B cell (primary cell): ENCODE measurements at regions of chr2 and their contacts with region 1.

Region 1: DNA sequence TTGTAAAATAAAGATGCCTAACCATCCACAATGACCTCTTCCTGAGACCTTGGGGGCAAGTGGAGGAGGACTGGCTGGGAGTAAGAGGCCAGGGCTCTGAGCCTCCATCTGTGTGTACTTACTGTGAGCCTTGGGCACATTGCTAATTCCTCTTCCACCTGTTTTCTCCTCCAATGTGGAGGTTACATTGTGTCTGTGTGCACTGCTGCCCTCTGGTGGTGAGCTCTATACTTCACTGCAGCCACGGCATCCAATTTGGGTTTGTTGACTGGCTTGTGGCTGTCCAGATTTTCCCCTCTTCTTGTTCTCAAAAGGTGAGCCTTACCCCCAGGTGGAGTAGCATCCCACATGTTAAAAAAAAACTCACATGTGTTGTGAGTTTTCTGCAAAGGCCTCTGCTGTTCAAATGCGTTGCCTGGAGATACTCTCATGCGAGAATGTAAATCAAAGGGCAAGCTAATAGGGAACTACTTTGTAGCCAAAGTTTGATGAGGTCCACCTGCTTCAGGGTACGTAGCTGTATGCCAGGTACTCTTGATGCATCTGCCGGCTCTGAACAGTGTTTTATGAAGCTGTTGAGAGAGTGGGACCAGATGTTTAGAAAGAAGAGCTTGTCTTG is 80.8 kb downstream of the APOB start:
- DNase-seq: peak; percentile 78
- ATAC-seq: peak; percentile 65
- H3K4me3 ChIP-seq: no peak overlapping the region
- H3K4me3 Mint-ChIP-seq: no peak overlapping the region
- H3K27ac ChIP-seq: no peak overlapping the region
- H3K27ac Mint-ChIP-seq: no peak overlapping the region
- H3K4me1 ChIP-seq: no peaks in the 10 kb centered on the region
- H3K4me1 Mint-ChIP-seq: no peaks in the 10 kb centered on the region
- H3K27me3 ChIP-seq: peaks cover 0 to 16% (median 4%) of the 10 kb centered on the region in 4 experiments
- H3K27me3 Mint-ChIP-seq: peaks cover 26% of the 10 kb centered on the region
- CTCF ChIP-seq: peak; percentile 92

Region 2: DNA sequence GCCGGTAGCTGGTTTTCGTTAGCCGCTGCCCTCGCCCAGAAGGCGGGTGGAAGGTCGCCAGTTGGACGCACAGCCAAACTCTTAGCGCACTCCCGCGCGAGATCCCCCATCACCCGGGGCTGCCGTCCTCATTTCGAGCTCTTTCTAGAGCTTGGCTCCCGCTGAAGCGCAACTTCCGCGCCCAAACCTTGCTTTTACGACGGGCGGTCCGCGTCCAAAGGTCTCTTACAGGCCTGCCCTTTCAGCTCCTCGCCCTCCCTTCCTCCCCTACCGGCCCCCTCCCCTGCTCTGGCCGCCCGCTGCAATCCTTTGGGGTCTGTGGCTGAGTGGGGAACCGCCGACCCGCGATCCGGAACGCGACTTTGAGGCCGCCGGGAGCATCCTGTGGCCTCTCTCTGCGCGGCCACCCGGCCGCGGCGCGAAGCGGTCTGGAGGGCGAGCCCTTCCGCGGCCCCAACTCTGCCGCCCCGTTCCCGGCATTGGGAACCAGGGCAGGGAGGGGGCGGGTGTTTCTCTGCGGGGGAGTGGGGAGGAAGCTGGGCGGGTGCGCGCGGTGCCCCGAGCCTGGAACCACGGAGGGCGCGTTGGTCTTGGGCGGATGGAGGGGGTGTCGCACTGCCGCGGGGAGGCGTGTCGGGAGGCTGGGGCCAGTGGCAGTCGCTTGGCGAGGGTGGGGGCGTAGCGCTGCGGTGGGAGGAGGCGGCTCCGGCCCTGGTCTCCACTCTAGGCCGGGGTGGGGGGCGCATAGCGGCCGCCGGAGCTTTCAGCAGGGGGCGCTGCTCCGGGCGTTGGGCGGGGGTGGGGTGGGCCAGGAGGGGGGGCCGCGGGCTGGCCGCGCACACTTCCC is 296.5 kb before region 1 on chr2 and contains the start of gene GDF7:
- CTCF ChIA-PET with region 1: interaction called, 331 read pairs
- POLR2A ChIA-PET with region 1: interaction called, 5 read pairs
- intact Hi-C with region 1: no loop called
- DNase-seq: peak; percentile 87
- ATAC-seq: peak; percentile 82
- H3K4me3 ChIP-seq: peak within 1 kb of the TSS in 4 of 5 experiments; percentile 57 to 80 (median 64)
- H3K4me3 Mint-ChIP-seq: peak within 1 kb of the TSS; percentile 95
- H3K27ac ChIP-seq: peak within 1 kb of the TSS; percentile 47 to 61
- H3K27ac Mint-ChIP-seq: peak within 1 kb of the TSS; percentile 94
- H3K4me1 ChIP-seq: peaks cover 35 to 64% of the 10 kb centered on the region in 2 donors
- H3K4me1 Mint-ChIP-seq: peaks cover 35% of the 10 kb centered on the region
- H3K27me3 ChIP-seq: peaks cover 0 to 85% (median 25%) of the 10 kb centered on the region in 4 experiments
- H3K27me3 Mint-ChIP-seq: peaks cover 14% of the 10 kb centered on the region
- CTCF ChIP-seq: peak; percentile 48
- total RNA-seq, gene GDF7: 14.8 and 15.3 TPM in 2 replicates

Region 3: GRCh38 chr2:20675701-20676352 is 287.2 kb before region 1 on chr2:
- CTCF ChIA-PET with region 1: interaction called, 46 read pairs
- POLR2A ChIA-PET with region 1: no interaction called
- intact Hi-C with region 1: no loop called
- DNase-seq: peak; percentile 83
- ATAC-seq: peak; percentile 79
- H3K4me3 ChIP-seq: peak overlapping the region in 1 of 5 experiments; percentile 15
- H3K4me3 Mint-ChIP-seq: peak overlapping the region; percentile 80
- H3K27ac ChIP-seq: peak overlapping the region; percentile 63 to 82
- H3K27ac Mint-ChIP-seq: peak overlapping the region; percentile 98
- H3K4me1 ChIP-seq: peaks cover 35 to 86% of the 10 kb centered on the region in 2 donors
- H3K4me1 Mint-ChIP-seq: peaks cover 59% of the 10 kb centered on the region
- H3K27me3 ChIP-seq: peaks cover 0 to 16% (median 4%) of the 10 kb centered on the region in 4 experiments
- H3K27me3 Mint-ChIP-seq: no peaks in the 10 kb centered on the region
- CTCF ChIP-seq: no peak

Region 4: DNA sequence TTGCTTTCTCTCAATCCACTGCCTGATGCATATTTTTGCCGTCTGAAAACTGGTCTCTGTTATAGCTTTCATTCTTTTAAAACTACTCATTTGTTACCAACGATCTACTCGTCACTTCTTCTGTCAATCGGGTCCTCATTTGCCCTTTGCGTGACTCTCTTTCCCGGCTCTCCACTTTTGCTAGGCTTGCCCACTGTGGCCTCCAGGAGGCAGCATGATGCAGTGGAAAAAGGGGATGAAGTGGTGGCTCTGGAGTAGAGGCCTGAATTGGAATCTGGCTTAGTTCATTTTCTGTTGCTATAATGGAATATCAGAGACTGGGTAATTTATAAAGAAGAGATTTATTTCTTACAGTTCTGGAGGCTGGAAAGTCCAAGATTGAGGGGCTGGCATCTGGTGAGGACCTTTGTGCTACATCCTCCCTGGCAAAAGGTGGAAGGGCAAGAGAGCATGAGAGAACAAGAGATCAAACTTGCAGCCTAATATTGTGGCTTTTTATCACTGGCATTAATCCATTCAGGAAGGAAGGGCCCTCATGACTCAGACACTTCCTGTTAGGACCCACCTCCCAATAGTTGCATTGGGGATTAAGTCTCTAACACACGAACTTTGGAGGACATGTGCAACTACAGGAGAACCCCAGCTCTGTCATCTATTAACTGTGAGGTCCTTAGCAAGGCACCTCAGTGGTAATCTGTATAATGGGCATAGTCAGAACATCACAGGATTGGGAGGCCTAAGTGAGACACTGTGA is 280.7 kb before region 1 on chr2:
- CTCF ChIA-PET with region 1: interaction called, 46 read pairs
- POLR2A ChIA-PET with region 1: no interaction called
- intact Hi-C with region 1: no loop called
- DNase-seq: no peak
- ATAC-seq: no peak
- H3K4me3 ChIP-seq: no peak overlapping the region
- H3K4me3 Mint-ChIP-seq: no peak overlapping the region
- H3K27ac ChIP-seq: no peak overlapping the region
- H3K27ac Mint-ChIP-seq: peak overlapping the region; percentile 71
- H3K4me1 ChIP-seq: peaks cover 5 to 27% of the 10 kb centered on the region in 2 donors
- H3K4me1 Mint-ChIP-seq: peaks cover 16% of the 10 kb centered on the region
- H3K27me3 ChIP-seq: no peaks in the 10 kb centered on the region
- H3K27me3 Mint-ChIP-seq: no peaks in the 10 kb centered on the region
- CTCF ChIP-seq: peak; percentile 23

Region 5: GRCh38 chr2:20723543-20723942 is 239.5 kb before region 1 on chr2:
- CTCF ChIA-PET with region 1: interaction called, 3 read pairs
- POLR2A ChIA-PET with region 1: no interaction called
- intact Hi-C with region 1: loop called (anchors 2 kb)
- DNase-seq: no peak
- ATAC-seq: no peak
- H3K4me3 ChIP-seq: no peak overlapping the region
- H3K4me3 Mint-ChIP-seq: no peak overlapping the region
- H3K27ac ChIP-seq: no peak overlapping the region
- H3K27ac Mint-ChIP-seq: no peak overlapping the region
- H3K4me1 ChIP-seq: no peaks in the 10 kb centered on the region
- H3K4me1 Mint-ChIP-seq: no peaks in the 10 kb centered on the region
- H3K27me3 ChIP-seq: no peaks in the 10 kb centered on the region
- H3K27me3 Mint-ChIP-seq: no peaks in the 10 kb centered on the region
- CTCF ChIP-seq: no peak

Region 6: DNA sequence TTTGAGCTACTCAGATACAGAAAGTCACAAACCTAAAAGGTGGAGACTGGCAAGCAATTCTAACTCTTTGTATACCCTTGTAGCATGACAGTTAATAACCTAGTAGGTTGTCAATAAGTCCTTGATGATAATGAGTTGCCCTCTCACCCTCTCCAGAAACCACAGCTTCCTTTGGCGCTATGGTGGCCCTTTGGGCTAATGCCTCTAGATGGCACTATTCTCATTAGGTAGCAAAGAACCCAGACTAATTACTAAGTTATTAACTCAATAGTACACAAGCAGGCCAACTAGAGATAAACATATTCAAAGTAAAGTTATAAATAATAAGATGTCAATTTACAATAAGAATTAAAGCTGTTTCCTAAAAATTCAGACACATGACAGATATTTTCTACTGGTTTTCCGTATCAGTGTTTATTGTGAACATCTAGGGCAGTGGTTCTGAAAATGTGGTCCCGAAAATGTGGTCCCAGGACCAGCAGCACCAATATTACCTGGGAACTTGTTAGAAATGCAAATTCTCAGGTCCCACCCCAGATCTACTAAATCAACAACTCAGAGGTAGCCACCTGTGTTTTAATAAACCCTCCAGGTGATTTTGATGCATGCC is 181.3 kb before region 1 on chr2:
- CTCF ChIA-PET with region 1: interaction called, 52 read pairs
- POLR2A ChIA-PET with region 1: no interaction called
- intact Hi-C with region 1: no loop called
- DNase-seq: peak; percentile 20
- ATAC-seq: peak; percentile 31
- H3K4me3 ChIP-seq: no peak overlapping the region
- H3K4me3 Mint-ChIP-seq: no peak overlapping the region
- H3K27ac ChIP-seq: no peak overlapping the region
- H3K27ac Mint-ChIP-seq: no peak overlapping the region
- H3K4me1 ChIP-seq: no peaks in the 10 kb centered on the region
- H3K4me1 Mint-ChIP-seq: no peaks in the 10 kb centered on the region
- H3K27me3 ChIP-seq: no peaks in the 10 kb centered on the region
- H3K27me3 Mint-ChIP-seq: no peaks in the 10 kb centered on the region
- CTCF ChIP-seq: peak; percentile 63

Region 7: DNA sequence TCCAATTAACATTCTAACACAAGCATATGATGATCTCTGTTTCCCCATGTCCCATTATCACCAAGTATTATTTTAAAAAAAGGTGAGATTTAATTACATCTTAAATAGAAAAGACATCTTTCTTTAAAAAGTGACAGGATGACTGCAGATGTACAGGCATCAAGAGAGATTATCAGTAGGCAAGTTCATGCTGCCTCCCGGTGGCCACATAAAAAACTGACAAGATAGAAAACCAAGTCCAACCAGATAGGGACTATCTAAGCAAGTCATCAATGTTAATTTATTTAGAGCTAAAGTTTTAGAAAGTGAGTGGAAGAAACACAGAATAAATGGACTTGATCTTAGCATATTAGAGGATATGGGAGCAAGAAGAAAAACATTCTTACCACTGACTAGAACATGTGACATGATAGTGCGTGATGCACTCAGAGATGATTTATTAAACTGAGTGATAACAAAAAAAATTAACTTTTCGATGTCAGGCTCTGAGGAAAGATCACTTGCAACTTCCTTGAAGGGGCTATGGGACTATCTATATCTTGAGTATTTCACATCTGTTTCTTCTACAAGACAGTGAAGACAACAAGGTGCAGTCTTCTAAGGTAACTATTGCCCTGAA is 155.4 kb after region 1 on chr2:
- CTCF ChIA-PET with region 1: no interaction called
- POLR2A ChIA-PET with region 1: no interaction called
- intact Hi-C with region 1: no loop called
- DNase-seq: peak; percentile 25
- ATAC-seq: no peak
- H3K4me3 ChIP-seq: no peak overlapping the region
- H3K4me3 Mint-ChIP-seq: no peak overlapping the region
- H3K27ac ChIP-seq: no peak overlapping the region
- H3K27ac Mint-ChIP-seq: no peak overlapping the region
- H3K4me1 ChIP-seq: no peaks in the 10 kb centered on the region
- H3K4me1 Mint-ChIP-seq: no peaks in the 10 kb centered on the region
- H3K27me3 ChIP-seq: no peaks in the 10 kb centered on the region
- H3K27me3 Mint-ChIP-seq: peaks cover 18% of the 10 kb centered on the region
- CTCF ChIP-seq: peak; percentile 35